Astrocyte of the cerebellum (primary cell): ENCODE measurements at regions of chr6 and their contacts with region 1.

Region 1: DNA sequence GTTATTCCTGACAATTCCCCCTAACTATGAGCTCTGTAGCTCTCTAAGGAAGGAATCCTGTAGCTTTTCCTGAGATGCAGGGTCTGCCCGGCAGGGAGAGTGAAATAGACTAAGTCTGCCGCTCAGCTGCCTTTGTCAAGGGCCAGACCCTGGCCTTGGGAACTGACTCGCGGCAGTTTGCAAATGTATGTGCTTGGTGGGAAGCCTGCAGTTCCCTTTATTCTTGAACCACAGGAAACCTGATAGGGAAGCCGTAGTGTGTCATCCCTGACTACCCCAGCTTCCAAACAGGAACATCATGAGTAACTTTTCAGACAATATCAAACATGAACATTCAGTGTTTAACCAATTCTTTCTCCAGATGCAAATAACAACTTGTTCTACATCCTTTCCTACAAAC is 78.7 kb upstream of the IFNGR1 start:
- DNase-seq: peak; percentile 57
- H3K4me3 ChIP-seq: no peak overlapping the region
- CTCF ChIP-seq: no peak

Region 2: GRCh38 chr6:137233911-137234863 is 63.7 kb before region 1 on chr6:
- in situ Hi-C with region 1: loop called (anchors 5 kb)
- DNase-seq: peak; percentile 69
- H3K4me3 ChIP-seq: no peak overlapping the region
- CTCF ChIP-seq: no peak

Region 3: GRCh38 chr6:137341681-137342195 is 43.9 kb after region 1 on chr6:
- in situ Hi-C with region 1: no loop called
- DNase-seq: no peak
- H3K4me3 ChIP-seq: no peak overlapping the region
- CTCF ChIP-seq: no peak